ENCODE measurements at regions of chr5 and their contacts with region 1.

Region 1: DNA sequence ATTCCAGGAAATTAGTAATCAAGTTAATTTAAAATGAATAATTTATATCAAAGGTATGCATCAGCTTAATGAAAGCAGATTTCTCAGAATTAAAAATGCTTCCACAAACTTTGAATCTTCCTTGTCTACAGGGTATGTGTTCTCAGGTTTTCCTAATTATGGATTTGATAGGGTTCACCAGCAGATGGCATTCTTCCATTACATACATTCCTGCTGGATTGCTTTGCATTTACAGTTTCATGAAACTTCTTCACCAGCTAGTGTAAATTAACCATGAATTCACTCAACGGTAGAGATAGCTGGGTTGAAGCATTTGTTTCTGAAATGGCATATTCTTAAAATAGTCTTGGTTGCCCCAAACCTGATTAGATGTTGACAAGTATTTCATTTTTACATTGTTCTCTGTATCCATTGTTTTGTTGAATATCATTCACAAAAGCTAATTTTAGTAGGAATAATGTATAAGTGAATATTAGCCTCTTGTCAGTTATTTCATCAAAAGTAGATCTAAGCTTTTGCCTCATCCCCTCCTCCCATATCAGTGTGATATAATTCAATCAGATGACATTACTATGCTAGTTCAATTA is 68.7 kb upstream of the WDR41 start:
- DNase-seq: peak; percentile 38
- ATAC-seq: peak; percentile 68; the same call in 1 of the 2 replicates
- H3K4me3 ChIP-seq: no peak overlapping the region
- H3K27ac ChIP-seq: no peak overlapping the region
- H3K4me1 ChIP-seq: no peaks in the 10 kb centered on the region
- H3K27me3 ChIP-seq: no peaks in the 10 kb centered on the region
- CTCF ChIP-seq: peak; percentile 59 to 68 (median 60); a peak in 5 of 6 replicates
- POLR2A ChIP-seq: no peak
- RAD21 ChIP-seq: peak; percentile 88

Region 2: GRCh38 chr5:77139001-77139400 is 421.8 kb before region 1 on chr5:
- CTCF ChIA-PET with region 1: no interaction called
- POLR2A ChIA-PET with region 1: no interaction called
- RAD21 ChIA-PET with region 1: no interaction called
- intact Hi-C with region 1: no loop called
- DNase-seq: no peak
- ATAC-seq: no peak
- H3K4me3 ChIP-seq: no peak overlapping the region
- H3K27ac ChIP-seq: no peak overlapping the region
- H3K4me1 ChIP-seq: no peaks in the 10 kb centered on the region
- H3K27me3 ChIP-seq: no peaks in the 10 kb centered on the region
- CTCF ChIP-seq: no peak
- POLR2A ChIP-seq: no peak
- RAD21 ChIP-seq: no peak

Region 3: DNA sequence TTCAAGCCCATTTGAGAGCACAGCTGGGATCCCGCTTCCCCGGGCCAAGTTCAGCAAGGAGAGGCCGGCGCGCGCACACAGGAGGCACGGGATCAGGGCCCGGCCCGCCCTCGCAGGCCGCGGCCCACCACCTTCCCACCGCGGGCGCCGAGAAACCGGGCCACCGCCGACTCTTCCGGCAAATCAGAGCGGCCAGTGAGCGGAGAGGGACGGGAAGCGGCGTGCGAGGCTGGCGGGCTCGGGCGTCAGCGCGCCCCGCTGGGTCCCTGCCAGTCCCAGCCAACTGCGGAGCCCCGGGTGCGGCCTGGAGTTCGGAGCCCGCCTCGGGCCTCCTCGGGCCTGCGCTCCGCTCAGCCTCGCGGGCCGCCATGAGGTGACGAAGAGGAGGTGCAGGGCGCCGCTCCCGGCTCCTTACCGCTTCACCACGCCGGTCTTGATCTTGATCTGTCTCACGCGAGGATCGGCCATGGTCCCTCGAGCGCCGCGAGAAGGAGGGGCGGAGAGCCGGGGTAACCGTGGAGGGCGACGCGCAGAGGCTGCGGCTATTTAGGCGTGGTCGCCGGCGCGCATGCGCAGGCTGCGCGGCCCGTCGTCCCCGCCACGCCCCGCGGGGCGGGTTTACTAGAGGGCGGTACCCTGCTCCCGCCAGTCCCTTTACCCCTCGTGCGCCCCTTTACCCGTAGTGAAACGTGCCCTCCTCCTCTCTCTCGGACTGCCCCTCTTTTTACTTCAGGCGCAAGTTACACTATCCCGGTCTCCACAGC is 215.2 kb after region 1 on chr5 and contains the start of gene TBCA:
- CTCF ChIA-PET with region 1: no interaction called
- POLR2A ChIA-PET with region 1: no interaction called
- RAD21 ChIA-PET with region 1: no interaction called
- intact Hi-C with region 1: no loop called
- DNase-seq: peak; percentile 83
- ATAC-seq: peak; percentile 95
- H3K4me3 ChIP-seq: peak within 1 kb of the TSS; percentile 77
- H3K27ac ChIP-seq: peak within 1 kb of the TSS; percentile 88
- H3K4me1 ChIP-seq: peaks cover 7 to 36% of the 10 kb centered on the region in 2 experiments
- H3K27me3 ChIP-seq: no peaks in the 10 kb centered on the region
- CTCF ChIP-seq: no peak
- POLR2A ChIP-seq: no peak
- RAD21 ChIP-seq: no peak
- total RNA-seq, gene TBCA: 317 TPM

Region 4: GRCh38 chr5:78008356-78008967 is 447.7 kb after region 1 on chr5:
- CTCF ChIA-PET with region 1: interaction called, 11 read pairs
- POLR2A ChIA-PET with region 1: no interaction called
- RAD21 ChIA-PET with region 1: no interaction called
- intact Hi-C with region 1: loop called (anchors 1 kb)
- DNase-seq: peak; percentile 21
- ATAC-seq: peak; percentile 72
- H3K4me3 ChIP-seq: no peak overlapping the region
- H3K27ac ChIP-seq: no peak overlapping the region
- H3K4me1 ChIP-seq: no peaks in the 10 kb centered on the region
- H3K27me3 ChIP-seq: no peaks in the 10 kb centered on the region
- CTCF ChIP-seq: peak; percentile 63 to 86 (median 85); a peak in 5 of 6 replicates
- POLR2A ChIP-seq: no peak
- RAD21 ChIP-seq: peak; percentile 78

Region 5: GRCh38 chr5:78162253-78162862 is 601.6 kb after region 1 on chr5:
- CTCF ChIA-PET with region 1: interaction called, 20 read pairs
- POLR2A ChIA-PET with region 1: no interaction called
- RAD21 ChIA-PET with region 1: no interaction called
- intact Hi-C with region 1: loop called (anchors 2 kb)
- DNase-seq: peak; percentile 41
- ATAC-seq: no peak
- H3K4me3 ChIP-seq: no peak overlapping the region
- H3K27ac ChIP-seq: no peak overlapping the region
- H3K4me1 ChIP-seq: no peaks in the 10 kb centered on the region
- H3K27me3 ChIP-seq: no peaks in the 10 kb centered on the region
- CTCF ChIP-seq: peak; percentile 37 to 75 (median 56); a peak in 5 of 6 replicates
- POLR2A ChIP-seq: no peak
- RAD21 ChIP-seq: peak; percentile 67

Region 6: GRCh38 chr5:78269088-78269703 is 708.4 kb after region 1 on chr5:
- CTCF ChIA-PET with region 1: interaction called, 15 read pairs
- POLR2A ChIA-PET with region 1: no interaction called
- RAD21 ChIA-PET with region 1: no interaction called
- intact Hi-C with region 1: loop called (anchors 2 kb)
- DNase-seq: no peak
- ATAC-seq: peak; percentile 66
- H3K4me3 ChIP-seq: no peak overlapping the region
- H3K27ac ChIP-seq: no peak overlapping the region
- H3K4me1 ChIP-seq: no peaks in the 10 kb centered on the region
- H3K27me3 ChIP-seq: no peaks in the 10 kb centered on the region
- CTCF ChIP-seq: peak; percentile 15 to 62 (median 40); a peak in 4 of 6 replicates
- POLR2A ChIP-seq: no peak
- RAD21 ChIP-seq: peak; percentile 48

Region 7: GRCh38 chr5:78294248-78295034 is 733.7 kb after region 1 on chr5 and contains the start of gene AP3B1:
- CTCF ChIA-PET with region 1: interaction called, 5 read pairs
- POLR2A ChIA-PET with region 1: no interaction called
- RAD21 ChIA-PET with region 1: no interaction called
- intact Hi-C with region 1: loop called (anchors 5 kb)
- DNase-seq: peak; percentile 97
- ATAC-seq: peak; percentile 91
- H3K4me3 ChIP-seq: peak within 1 kb of the TSS; percentile 80 to 94
- H3K27ac ChIP-seq: peak within 1 kb of the TSS; percentile 73
- H3K4me1 ChIP-seq: peaks cover 2 to 8% of the 10 kb centered on the region in 2 experiments; a peak in 2 of 4 replicates
- H3K27me3 ChIP-seq: no peaks in the 10 kb centered on the region
- CTCF ChIP-seq: no peak
- POLR2A ChIP-seq: peak; percentile 81
- RAD21 ChIP-seq: no peak
- total RNA-seq, gene AP3B1: 54.5 TPM